ENCODE measurements at regions of chr17 and their contacts with region 1.

Region 1: GRCh38 chr17:14300575-14301278 is at the start of gene HS3ST3B1:
- DNase-seq: peak; percentile 99
- H3K4me3 ChIP-seq: peak within 1 kb of the TSS; percentile 98
- CTCF ChIP-seq: peak; percentile 23

Region 2: GRCh38 chr17:13594762-13595598 is 705.7 kb before region 1 on chr17:
- CTCF ChIA-PET with region 1: interaction called, 112 read pairs
- POLR2A ChIA-PET with region 1: interaction called, 9 read pairs
- DNase-seq: peak; percentile 57
- H3K4me3 ChIP-seq: no peak overlapping the region
- CTCF ChIP-seq: peak; percentile 79

Region 3: DNA sequence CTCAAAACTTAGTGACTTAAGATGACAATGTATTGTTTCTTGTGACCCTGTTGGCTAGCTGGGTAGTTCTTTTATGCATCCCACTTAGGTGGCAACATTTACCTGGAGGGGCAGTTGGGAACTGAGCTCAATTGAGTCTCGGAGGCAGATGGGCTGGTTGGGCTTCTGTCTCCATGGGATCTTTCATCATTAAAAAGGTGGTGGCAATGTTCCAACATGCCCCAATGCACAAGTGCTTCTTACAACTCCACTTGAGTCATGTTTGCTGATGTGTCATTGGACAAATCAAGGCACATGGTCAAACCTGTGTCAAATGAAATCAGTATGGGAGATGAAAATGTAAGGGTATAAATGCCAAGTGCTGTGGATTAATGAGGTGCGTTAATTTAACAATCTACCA is 11.6 kb before region 1 on chr17:
- CTCF ChIA-PET with region 1: interaction called, 10 read pairs
- POLR2A ChIA-PET with region 1: no interaction called
- DNase-seq: no peak
- H3K4me3 ChIP-seq: no peak overlapping the region
- CTCF ChIP-seq: no peak

Measured in AG04449 (cell line).